CD8-positive, alpha-beta T cell (primary cell): ENCODE measurements at regions of chr2 and their contacts with region 1.

Region 1: GRCh38 chr2:68251187-68251854 is 1.0 kb downstream of the PPP3R1 start:
- DNase-seq: peak; percentile 54 to 94 (median 76)
- ATAC-seq: peak; percentile 66
- H3K4me3 ChIP-seq: peak overlapping the region; percentile 68
- H3K4me3 Mint-ChIP-seq: peak overlapping the region; percentile 89
- H3K27ac ChIP-seq: peak overlapping the region; percentile 84 to 85
- H3K27ac Mint-ChIP-seq: peak overlapping the region; percentile 95
- H3K4me1 ChIP-seq: peaks cover 60% of the 10 kb centered on the region
- H3K4me1 Mint-ChIP-seq: peaks cover 42% of the 10 kb centered on the region
- H3K27me3 ChIP-seq: no peaks in the 10 kb centered on the region
- H3K27me3 Mint-ChIP-seq: no peaks in the 10 kb centered on the region
- CTCF ChIP-seq: peak; percentile 70

Region 2: GRCh38 chr2:68062680-68063387 is 188.5 kb before region 1 on chr2 and contains the start of gene C1D:
- CTCF ChIA-PET with region 1: no interaction called
- POLR2A ChIA-PET with region 1: no interaction called
- intact Hi-C with region 1: loop called (anchors 1 to 2 kb)
- DNase-seq: peak; percentile 88 to 96 (median 93)
- ATAC-seq: peak; percentile 89
- H3K4me3 ChIP-seq: peak within 1 kb of the TSS; percentile 66 to 91
- H3K4me3 Mint-ChIP-seq: peak within 1 kb of the TSS; percentile 96
- H3K27ac ChIP-seq: peak within 1 kb of the TSS; percentile 95 to 96
- H3K27ac Mint-ChIP-seq: peak within 1 kb of the TSS; percentile 98
- H3K4me1 ChIP-seq: peaks cover 30% of the 10 kb centered on the region
- H3K4me1 Mint-ChIP-seq: peaks cover 48% of the 10 kb centered on the region
- H3K27me3 ChIP-seq: no peaks in the 10 kb centered on the region
- H3K27me3 Mint-ChIP-seq: peaks cover 4% of the 10 kb centered on the region
- CTCF ChIP-seq: no peak
- total RNA-seq, gene C1D: 30.1 to 32.7 TPM

Region 3: DNA sequence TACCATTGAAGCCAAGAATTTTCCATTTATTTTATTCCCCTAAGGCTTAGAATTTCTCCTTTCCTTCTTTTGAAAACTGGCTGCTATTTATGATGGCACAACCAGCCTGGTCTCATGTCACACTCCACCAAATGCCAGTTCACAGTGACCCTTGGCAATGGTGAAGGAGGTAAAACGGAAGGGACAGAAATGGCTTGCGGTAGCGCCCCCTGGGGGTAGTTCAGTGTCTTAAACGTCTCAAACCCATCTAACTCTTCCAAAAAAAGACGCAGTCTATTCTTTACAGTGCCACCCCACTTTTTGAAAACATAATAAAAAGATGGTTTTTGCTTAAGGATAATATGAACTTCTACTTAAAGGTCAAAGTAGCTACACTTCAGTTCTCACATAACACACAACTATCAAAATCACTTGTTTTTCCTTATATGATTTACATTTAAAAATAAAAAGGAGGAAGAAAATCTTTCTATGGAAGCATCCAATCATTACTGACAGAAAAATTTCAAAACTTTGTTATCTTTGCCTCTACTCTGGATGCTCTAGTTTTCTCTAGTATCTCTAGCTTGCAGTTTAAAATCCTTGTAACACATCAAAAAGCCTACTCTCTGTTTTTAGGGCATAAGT is 65.7 kb before region 1 on chr2:
- CTCF ChIA-PET with region 1: interaction called, 4 read pairs
- POLR2A ChIA-PET with region 1: interaction called, 3 read pairs
- intact Hi-C with region 1: loop called in 1 of 2 experiments (anchors 2 kb)
- DNase-seq: peak; percentile 11 to 80 (median 57)
- ATAC-seq: peak; percentile 60
- H3K4me3 ChIP-seq: no peak overlapping the region
- H3K4me3 Mint-ChIP-seq: no peak overlapping the region
- H3K27ac ChIP-seq: no peak overlapping the region
- H3K27ac Mint-ChIP-seq: no peak overlapping the region
- H3K4me1 ChIP-seq: peaks cover 7% of the 10 kb centered on the region
- H3K4me1 Mint-ChIP-seq: peaks cover 34% of the 10 kb centered on the region
- H3K27me3 ChIP-seq: no peaks in the 10 kb centered on the region
- H3K27me3 Mint-ChIP-seq: no peaks in the 10 kb centered on the region
- CTCF ChIP-seq: peak; percentile 81

Region 4: DNA sequence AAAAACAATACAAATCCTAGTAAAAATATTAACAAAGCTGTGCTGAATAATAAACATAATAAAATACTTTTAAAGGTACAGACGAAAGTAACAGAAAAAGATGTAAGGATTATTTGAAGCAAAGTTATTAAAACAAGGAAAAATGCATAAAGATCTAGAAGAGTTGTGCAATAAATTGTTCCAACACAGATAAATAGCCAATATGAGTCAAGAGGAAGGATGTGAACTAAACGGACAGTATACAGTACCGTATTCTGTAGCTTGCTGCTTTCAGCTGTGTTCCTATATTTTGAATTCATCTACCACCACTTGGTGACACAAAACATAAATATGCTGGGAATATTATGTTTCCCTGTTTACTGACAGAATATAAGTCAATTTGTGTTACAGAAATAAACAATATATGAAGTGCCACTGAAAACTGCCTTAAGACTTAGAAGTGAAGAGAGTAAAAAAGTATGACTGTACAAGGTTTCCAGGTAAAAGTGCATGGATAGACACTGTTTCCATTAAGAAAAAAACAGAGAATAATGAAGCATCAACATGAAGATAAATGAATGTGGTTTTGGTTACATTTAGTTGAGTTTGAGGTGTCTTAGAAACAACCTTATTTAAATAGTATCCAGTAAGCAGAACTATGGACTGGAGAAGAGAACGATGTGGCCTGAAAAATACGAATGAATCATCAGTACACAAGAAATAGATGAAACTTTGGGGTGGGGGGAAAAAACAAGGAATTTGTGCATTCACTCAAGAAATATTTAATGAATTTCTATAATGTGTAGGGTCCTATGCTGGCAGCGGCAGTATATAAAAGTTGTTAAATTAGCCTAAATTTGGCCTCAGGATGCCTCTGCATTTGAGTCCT is 12.1 kb before region 1 on chr2:
- CTCF ChIA-PET with region 1: interaction called, 5 read pairs
- POLR2A ChIA-PET with region 1: interaction called, 4 read pairs
- intact Hi-C with region 1: loop called in 1 of 2 experiments (anchors 2 kb)
- DNase-seq: no peak
- ATAC-seq: no peak
- H3K4me3 ChIP-seq: no peak overlapping the region
- H3K4me3 Mint-ChIP-seq: peak overlapping the region; percentile 41
- H3K27ac ChIP-seq: peak overlapping the region in 1 of 2 experiments; percentile 3
- H3K27ac Mint-ChIP-seq: peak overlapping the region; percentile 87
- H3K4me1 ChIP-seq: peaks cover 83% of the 10 kb centered on the region
- H3K4me1 Mint-ChIP-seq: peaks cover 85% of the 10 kb centered on the region
- H3K27me3 ChIP-seq: no peaks in the 10 kb centered on the region
- H3K27me3 Mint-ChIP-seq: no peaks in the 10 kb centered on the region
- CTCF ChIP-seq: no peak

Region 5: GRCh38 chr2:68734688-68735525 is 483.6 kb after region 1 on chr2 and contains the start of gene ARHGAP25:
- CTCF ChIA-PET with region 1: no interaction called
- POLR2A ChIA-PET with region 1: no interaction called
- intact Hi-C with region 1: loop called in 1 of 2 experiments (anchors 10 kb)
- DNase-seq: peak in 7 of 9 experiments; percentile 25 to 83 (median 61)
- ATAC-seq: peak; percentile 65
- H3K4me3 ChIP-seq: peak within 1 kb of the TSS; percentile 61 to 84
- H3K4me3 Mint-ChIP-seq: no peak within 1 kb of the TSS
- H3K27ac ChIP-seq: peak within 1 kb of the TSS; percentile 62 to 81
- H3K27ac Mint-ChIP-seq: no peak within 1 kb of the TSS
- H3K4me1 ChIP-seq: peaks cover 41% of the 10 kb centered on the region
- H3K4me1 Mint-ChIP-seq: peaks cover 38% of the 10 kb centered on the region
- H3K27me3 ChIP-seq: no peaks in the 10 kb centered on the region
- H3K27me3 Mint-ChIP-seq: no peaks in the 10 kb centered on the region
- CTCF ChIP-seq: no peak
- total RNA-seq, gene ARHGAP25: 35.8 to 36.7 TPM

Region 6: GRCh38 chr2:70248181-70248847 is 1997.0 kb after region 1 on chr2 and contains the start of gene TIA1:
- CTCF ChIA-PET with region 1: no interaction called
- POLR2A ChIA-PET with region 1: no interaction called
- intact Hi-C with region 1: loop called in 1 of 2 experiments (anchors 10 kb)
- DNase-seq: peak; percentile 96 to 100 (median 98)
- ATAC-seq: peak; percentile 98
- H3K4me3 ChIP-seq: peak within 1 kb of the TSS; percentile 86 to 90
- H3K4me3 Mint-ChIP-seq: peak within 1 kb of the TSS; percentile 97
- H3K27ac ChIP-seq: peak within 1 kb of the TSS; percentile 86 to 92
- H3K27ac Mint-ChIP-seq: peak within 1 kb of the TSS; percentile 98
- H3K4me1 ChIP-seq: peaks cover 30% of the 10 kb centered on the region
- H3K4me1 Mint-ChIP-seq: peaks cover 37% of the 10 kb centered on the region
- H3K27me3 ChIP-seq: no peaks in the 10 kb centered on the region
- H3K27me3 Mint-ChIP-seq: no peaks in the 10 kb centered on the region
- CTCF ChIP-seq: no peak
- total RNA-seq, gene TIA1: 55.9 to 62.6 TPM